Activated CD4-positive, alpha-beta T cell treated with anti-CD3 and anti-CD28 coated beads for 36 hours (primary cell): ENCODE measurements at regions of chr22 and their contacts with region 1.

Region 1: DNA sequence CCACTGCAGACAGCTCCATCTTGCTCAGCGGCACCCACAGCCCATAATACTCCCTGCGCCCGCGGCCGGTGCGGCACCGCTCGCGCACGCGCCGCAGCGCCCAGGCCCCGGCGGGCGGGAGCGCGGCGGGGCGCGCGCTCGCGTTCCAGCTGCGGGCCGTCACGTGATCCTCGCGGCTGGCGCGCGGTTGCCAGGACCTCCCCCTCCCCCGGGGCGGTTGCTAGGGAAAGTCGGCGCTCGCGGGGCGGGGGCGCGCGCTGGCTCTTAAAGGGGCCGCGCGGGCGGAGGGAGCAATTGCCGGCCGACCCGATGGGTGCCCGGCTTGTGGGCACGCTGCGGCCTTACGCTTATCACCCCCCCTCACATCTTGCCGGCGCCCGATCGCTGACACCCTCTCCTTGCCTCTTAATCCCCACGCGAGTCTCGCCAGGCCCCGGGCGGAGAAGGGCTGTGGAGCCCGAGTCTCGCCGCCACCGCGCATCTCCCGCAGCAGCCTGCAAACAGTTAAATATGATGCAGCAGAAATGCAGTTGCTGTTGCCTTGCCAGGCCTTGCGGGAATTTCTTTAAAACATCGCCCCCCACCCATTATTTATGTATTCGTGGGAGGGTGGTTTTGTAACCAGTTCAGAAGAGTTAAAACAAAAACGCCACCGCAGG is at the start of gene CBX6:
- DNase-seq: peak; percentile 97
- ATAC-seq: peak; percentile 55
- H3K4me3 Mint-ChIP-seq: peak within 1 kb of the TSS; percentile 93
- H3K27ac Mint-ChIP-seq: peak within 1 kb of the TSS; percentile 94
- H3K4me1 Mint-ChIP-seq: peaks cover 58% of the 10 kb centered on the region
- H3K27me3 Mint-ChIP-seq: no peaks in the 10 kb centered on the region
- total RNA-seq, gene CBX6: 96.1 to 112 TPM

Region 2: DNA sequence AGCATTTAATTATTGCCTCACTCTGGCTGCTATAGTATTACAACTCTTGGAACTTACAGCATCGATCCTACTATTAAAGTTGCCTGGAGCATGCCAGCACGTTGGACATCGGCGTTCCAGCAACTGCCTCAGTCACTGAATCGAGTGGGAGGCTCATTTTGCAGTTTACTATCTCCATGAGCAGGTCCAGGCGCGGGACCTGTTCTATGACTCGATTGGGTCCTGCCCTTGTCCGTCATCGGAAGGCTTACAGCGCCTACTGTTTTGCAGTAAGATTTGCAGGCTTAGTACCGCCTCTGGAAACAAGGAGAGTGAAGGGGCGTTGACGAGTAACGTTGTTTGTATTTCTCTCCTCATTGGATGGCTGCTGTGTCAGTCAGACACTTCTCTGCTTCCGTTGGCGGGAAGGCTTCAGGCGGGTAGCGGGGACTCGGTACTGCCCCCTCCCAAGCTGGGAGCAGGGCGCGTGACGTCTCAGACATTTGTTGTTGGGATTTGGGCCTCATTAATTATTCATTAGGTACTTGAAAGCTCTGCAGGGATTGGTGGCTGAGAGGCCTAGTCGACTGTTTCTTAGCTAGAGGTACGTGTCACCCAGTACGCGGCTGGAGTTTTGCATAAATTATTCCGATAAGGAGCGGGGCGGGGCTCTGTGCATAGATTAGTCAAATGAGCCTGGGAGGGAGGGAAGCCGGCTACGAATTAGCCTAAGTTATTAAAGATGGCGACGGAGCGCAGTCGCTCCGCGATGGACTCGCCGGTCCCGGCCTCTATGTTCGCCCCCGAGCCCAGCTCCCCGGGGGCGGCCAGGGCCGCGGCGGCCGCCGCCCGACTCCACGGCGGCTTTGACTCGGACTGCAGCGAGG is 166.8 kb before region 1 on chr22 and contains the start of gene GTPBP1:
- CTCF ChIA-PET with region 1: no interaction called
- POLR2A ChIA-PET with region 1: no interaction called
- intact Hi-C with region 1: loop called in 1 of 2 experiments (anchors 1 kb)
- DNase-seq: peak; percentile 98
- ATAC-seq: peak; percentile 89
- H3K4me3 Mint-ChIP-seq: peak within 1 kb of the TSS; percentile 93
- H3K27ac Mint-ChIP-seq: peak within 1 kb of the TSS; percentile 97
- H3K4me1 Mint-ChIP-seq: peaks cover 53% of the 10 kb centered on the region
- H3K27me3 Mint-ChIP-seq: no peaks in the 10 kb centered on the region
- total RNA-seq, gene GTPBP1: 88.6 to 92.8 TPM

Region 3: GRCh38 chr22:38843201-38843715 is 29.0 kb before region 1 on chr22:
- CTCF ChIA-PET with region 1: interaction called, 18 read pairs
- POLR2A ChIA-PET with region 1: no interaction called
- intact Hi-C with region 1: no loop called
- DNase-seq: peak; percentile 79
- ATAC-seq: peak; percentile 92
- H3K4me3 Mint-ChIP-seq: peak overlapping the region; percentile 68
- H3K27ac Mint-ChIP-seq: no peak overlapping the region
- H3K4me1 Mint-ChIP-seq: peaks cover 17% of the 10 kb centered on the region
- H3K27me3 Mint-ChIP-seq: peaks cover 18% of the 10 kb centered on the region

Region 4: DNA sequence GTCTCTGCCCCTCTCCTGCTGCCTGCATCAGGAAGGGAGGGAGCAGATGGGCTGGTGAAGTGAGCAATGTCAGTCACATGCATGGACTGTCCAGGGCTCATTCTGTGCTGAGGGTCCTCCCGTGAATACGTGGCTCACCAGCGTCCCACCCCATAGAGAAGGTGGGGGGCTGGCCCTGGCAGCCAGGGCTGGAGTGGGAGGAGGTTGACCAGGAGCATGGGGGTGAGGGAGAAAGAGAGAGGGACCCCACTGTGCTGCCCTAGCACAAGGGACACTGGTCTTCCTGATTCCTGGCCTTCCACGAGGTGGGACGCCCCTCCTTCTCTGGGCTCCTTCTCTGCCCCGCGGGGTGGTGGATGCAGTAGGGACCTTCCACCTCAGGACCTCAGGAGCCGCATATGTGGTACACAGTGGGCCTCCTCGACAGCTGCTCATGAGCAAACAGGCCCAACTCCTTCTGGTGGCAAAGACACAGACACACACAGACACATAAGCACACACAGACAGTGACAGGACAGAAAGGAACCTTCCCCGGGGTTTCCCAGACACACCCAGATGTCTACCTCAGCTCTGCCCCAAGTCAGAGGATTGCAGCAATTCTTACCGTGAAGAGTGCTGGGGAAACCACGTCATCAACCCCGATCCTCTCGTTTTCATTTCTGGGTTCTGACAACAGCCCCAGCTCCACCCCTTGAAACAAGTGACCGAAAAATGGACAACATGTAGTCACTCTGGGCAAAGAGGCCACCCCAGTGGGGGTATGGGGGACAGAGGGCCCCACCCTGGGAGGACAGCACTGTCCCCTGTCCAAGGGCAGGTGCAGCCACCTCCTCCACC is 81.5 kb after region 1 on chr22:
- CTCF ChIA-PET with region 1: interaction called, 26 read pairs
- POLR2A ChIA-PET with region 1: interaction called, 5 read pairs
- intact Hi-C with region 1: loop called in 1 of 2 experiments (anchors 1 kb)
- DNase-seq: peak; percentile 90
- ATAC-seq: peak; percentile 95
- H3K4me3 Mint-ChIP-seq: peak overlapping the region; percentile 60
- H3K27ac Mint-ChIP-seq: peak overlapping the region; percentile 93
- H3K4me1 Mint-ChIP-seq: peaks cover 24% of the 10 kb centered on the region
- H3K27me3 Mint-ChIP-seq: peaks cover 8% of the 10 kb centered on the region

Region 5: DNA sequence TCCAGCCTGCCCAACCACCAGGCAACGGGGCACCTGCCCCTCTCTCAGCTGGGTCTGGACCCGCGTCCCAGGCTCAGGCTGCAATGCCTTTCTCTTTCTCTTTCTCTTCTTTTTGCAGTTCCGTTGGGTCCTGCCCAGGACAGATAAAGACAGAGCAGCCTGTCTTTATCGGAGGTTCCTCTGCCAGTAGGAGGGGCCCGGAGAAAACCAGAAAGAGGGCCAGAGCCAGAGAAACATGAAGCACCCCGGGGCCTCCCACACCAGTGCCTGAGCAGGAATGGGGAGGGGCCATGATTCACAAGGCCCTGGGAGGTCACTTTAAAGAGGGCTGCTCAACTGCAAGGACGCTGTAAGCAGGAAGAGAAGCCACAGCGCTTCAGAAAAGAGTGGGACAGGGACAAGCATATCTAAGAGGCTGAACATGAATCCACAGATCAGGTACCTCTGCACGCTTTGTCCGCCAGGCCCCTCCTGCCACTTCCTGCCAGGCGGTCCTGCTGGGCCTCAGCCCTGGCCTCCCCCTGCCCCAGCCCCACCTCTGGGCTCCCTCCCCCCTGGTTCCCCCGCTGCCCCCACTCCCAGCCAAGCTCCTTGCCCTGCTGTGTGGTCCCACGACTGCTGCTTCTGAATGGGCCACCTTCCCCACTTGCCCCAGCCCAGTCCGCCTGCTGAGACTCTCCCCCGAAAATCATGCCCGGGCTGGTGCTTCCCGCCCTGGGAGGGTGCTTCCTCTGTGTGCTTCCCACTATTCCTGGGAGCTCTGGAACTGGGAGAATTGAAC is 141.8 kb after region 1 on chr22 and contains the start of gene APOBEC3C:
- CTCF ChIA-PET with region 1: interaction called, 3 read pairs
- POLR2A ChIA-PET with region 1: no interaction called
- intact Hi-C with region 1: loop called in 1 of 2 experiments (anchors 2 kb)
- DNase-seq: peak; percentile 89
- ATAC-seq: peak; percentile 96
- H3K4me3 Mint-ChIP-seq: peak within 1 kb of the TSS; percentile 93
- H3K27ac Mint-ChIP-seq: peak within 1 kb of the TSS; percentile 95
- H3K4me1 Mint-ChIP-seq: peaks cover 33% of the 10 kb centered on the region
- H3K27me3 Mint-ChIP-seq: no peaks in the 10 kb centered on the region
- total RNA-seq, gene APOBEC3C: 75.3 to 98.5 TPM

Region 6: GRCh38 chr22:39117585-39118191 is 245.4 kb after region 1 on chr22:
- CTCF ChIA-PET with region 1: interaction called, 6 read pairs
- POLR2A ChIA-PET with region 1: no interaction called
- intact Hi-C with region 1: loop called (anchors 2 to 5 kb)
- DNase-seq: peak; percentile 84
- ATAC-seq: peak; percentile 60
- H3K4me3 Mint-ChIP-seq: peak overlapping the region; percentile 10
- H3K27ac Mint-ChIP-seq: peak overlapping the region; percentile 86
- H3K4me1 Mint-ChIP-seq: peaks cover 54% of the 10 kb centered on the region
- H3K27me3 Mint-ChIP-seq: no peaks in the 10 kb centered on the region